GM12878 (cell line): ENCODE measurements at regions of chr5 and their contacts with region 1.

Region 1: DNA sequence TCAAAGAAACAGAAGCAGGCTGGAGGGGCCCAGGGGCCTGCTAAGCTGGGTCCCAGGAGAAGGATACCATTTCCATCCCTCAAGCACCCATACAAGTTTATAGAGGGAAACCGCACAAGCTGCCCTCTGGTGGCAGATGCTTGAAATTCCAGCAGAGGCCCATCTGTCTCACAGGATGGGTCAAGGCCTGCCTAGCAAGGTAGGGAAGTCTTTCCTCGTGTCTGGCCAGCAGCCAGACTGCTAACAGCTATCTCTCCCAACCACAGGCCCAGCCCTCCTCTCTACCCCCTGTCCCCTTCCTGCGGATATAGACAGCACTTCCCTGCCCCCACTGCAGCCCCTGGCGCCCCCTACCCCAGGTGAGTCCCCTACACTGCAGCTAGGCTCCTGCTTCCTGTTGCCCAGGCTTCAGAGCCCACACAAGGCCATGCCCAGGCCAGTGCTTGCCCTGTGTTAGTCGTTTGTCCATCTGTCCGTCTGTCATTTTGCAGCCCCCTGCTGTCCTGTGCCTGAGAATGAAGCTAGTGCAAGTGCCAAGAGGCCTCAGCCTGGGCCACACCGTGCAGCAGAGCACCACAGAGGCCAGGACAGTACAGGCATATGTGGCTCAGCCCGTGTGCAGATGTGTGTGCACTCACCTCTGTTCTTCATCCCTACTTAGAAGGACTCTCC is 26.2 kb downstream of the TCF7 start:
- DNase-seq: no peak
- ATAC-seq: peak; percentile 68
- H3K4me3 ChIP-seq: no peak overlapping the region
- H3K27ac ChIP-seq: peak overlapping the region; percentile 90
- H3K4me1 ChIP-seq: peaks cover 50% of the 10 kb centered on the region
- H3K27me3 ChIP-seq: no peaks in the 10 kb centered on the region
- CTCF ChIP-seq: peak; percentile 78 to 83 (median 80)
- EP300 ChIP-seq: no peak
- POLR2A ChIP-seq: peak; percentile 41; the same call in 1 of the 2 replicates
- RAD21 ChIP-seq: peak; percentile 82

Region 2: DNA sequence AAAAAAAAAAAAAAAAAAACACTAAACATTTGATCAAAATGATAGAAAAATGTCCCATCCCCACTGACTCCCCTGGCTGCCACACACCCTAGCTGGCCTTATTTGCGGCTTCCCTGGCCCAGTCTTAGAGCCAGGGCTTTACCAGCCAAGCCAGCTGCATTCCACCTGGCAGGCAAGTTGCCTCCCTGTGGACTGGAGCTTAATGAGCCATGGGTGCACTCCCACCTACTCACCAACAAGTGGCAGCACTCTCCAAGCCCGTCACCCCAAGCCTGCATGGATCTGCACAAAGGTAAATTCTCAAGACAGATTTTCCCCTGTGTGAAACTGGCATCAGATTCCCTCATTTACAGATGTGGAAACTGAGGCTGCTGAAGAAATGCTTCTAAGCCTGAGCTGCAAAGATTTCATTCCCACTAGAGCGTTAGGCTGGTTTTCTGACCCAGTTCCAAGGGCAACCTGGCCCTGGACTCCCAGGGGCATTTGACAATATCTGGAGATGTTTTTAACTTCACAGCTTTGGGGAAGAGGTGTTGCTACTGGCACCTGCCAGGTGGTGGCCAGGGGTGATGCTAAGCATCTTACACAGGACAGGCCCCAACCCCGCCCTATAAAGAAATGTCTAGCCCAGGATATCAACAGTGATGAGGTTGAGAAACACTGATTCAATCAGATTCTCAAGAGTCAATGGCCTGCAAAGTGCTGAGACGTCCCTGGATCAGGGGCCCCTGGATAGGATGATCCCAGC is 114.0 kb before region 1 on chr5:
- CTCF ChIA-PET with region 1: interaction called, 792 read pairs
- POLR2A ChIA-PET with region 1: interaction called, 3 read pairs
- RAD21 ChIA-PET with region 1: interaction called, 13 read pairs
- SMC1A ChIA-PET with region 1: interaction called, 441 read pairs
- in situ Hi-C with region 1: no loop called
- intact Hi-C with region 1: no loop called
- DNase-seq: no peak
- ATAC-seq: peak; percentile 95
- H3K4me3 ChIP-seq: no peak overlapping the region
- H3K27ac ChIP-seq: no peak overlapping the region
- H3K4me1 ChIP-seq: peaks cover 17% of the 10 kb centered on the region
- H3K27me3 ChIP-seq: no peaks in the 10 kb centered on the region; a peak in 2 of 4 replicates
- CTCF ChIP-seq: peak; percentile 76 to 79 (median 78)
- EP300 ChIP-seq: no peak
- POLR2A ChIP-seq: no peak
- RAD21 ChIP-seq: peak; percentile 72

Region 3: GRCh38 chr5:134053840-134054338 is 86.8 kb before region 1 on chr5:
- CTCF ChIA-PET with region 1: interaction called, 30 read pairs
- POLR2A ChIA-PET with region 1: interaction called, 6 read pairs
- RAD21 ChIA-PET with region 1: interaction called, 8 read pairs
- SMC1A ChIA-PET with region 1: interaction called, 6 read pairs
- in situ Hi-C with region 1: no loop called
- intact Hi-C with region 1: no loop called
- DNase-seq: no peak
- ATAC-seq: peak; percentile 89
- H3K4me3 ChIP-seq: no peak overlapping the region
- H3K27ac ChIP-seq: no peak overlapping the region
- H3K4me1 ChIP-seq: peaks cover 11% of the 10 kb centered on the region
- H3K27me3 ChIP-seq: no peaks in the 10 kb centered on the region
- CTCF ChIP-seq: no peak
- EP300 ChIP-seq: no peak; a peak in 1 of 4 replicates
- POLR2A ChIP-seq: no peak
- RAD21 ChIP-seq: no peak

Region 4: GRCh38 chr5:134113902-134114875 is 26.5 kb before region 1 on chr5 and contains the start of gene TCF7:
- CTCF ChIA-PET with region 1: interaction called, 88 read pairs
- POLR2A ChIA-PET with region 1: interaction called, 291 read pairs
- RAD21 ChIA-PET with region 1: interaction called, 123 read pairs
- SMC1A ChIA-PET with region 1: interaction called, 5 read pairs
- in situ Hi-C with region 1: no loop called
- intact Hi-C with region 1: no loop called
- DNase-seq: no peak
- ATAC-seq: peak; percentile 82
- H3K4me3 ChIP-seq: peak within 1 kb of the TSS; percentile 83
- H3K27ac ChIP-seq: peak within 1 kb of the TSS; percentile 56
- H3K4me1 ChIP-seq: peaks cover 40% of the 10 kb centered on the region
- H3K27me3 ChIP-seq: no peaks in the 10 kb centered on the region; a peak in 1 of 4 replicates
- CTCF ChIP-seq: no peak
- EP300 ChIP-seq: no peak
- POLR2A ChIP-seq: peak; percentile 72
- RAD21 ChIP-seq: no peak
- polyA plus RNA-seq, gene TCF7: 10.0 to 13.2 TPM

Region 5: GRCh38 chr5:134125039-134126015 is 15.3 kb before region 1 on chr5:
- CTCF ChIA-PET with region 1: interaction called, 184 read pairs
- POLR2A ChIA-PET with region 1: interaction called, 291 read pairs
- RAD21 ChIA-PET with region 1: interaction called, 128 read pairs
- SMC1A ChIA-PET with region 1: interaction called, 76 read pairs
- in situ Hi-C with region 1: no loop called
- intact Hi-C with region 1: no loop called
- DNase-seq: no peak
- ATAC-seq: peak; percentile 41
- H3K4me3 ChIP-seq: no peak overlapping the region
- H3K27ac ChIP-seq: peak overlapping the region; percentile 47
- H3K4me1 ChIP-seq: peaks cover 64% of the 10 kb centered on the region
- H3K27me3 ChIP-seq: no peaks in the 10 kb centered on the region
- CTCF ChIP-seq: no peak
- EP300 ChIP-seq: 0 out of 4 replicates have a peak, but pooled peaks of 1 of the 2 experiments have one; percentile 11
- POLR2A ChIP-seq: no peak
- RAD21 ChIP-seq: no peak

Region 6: DNA sequence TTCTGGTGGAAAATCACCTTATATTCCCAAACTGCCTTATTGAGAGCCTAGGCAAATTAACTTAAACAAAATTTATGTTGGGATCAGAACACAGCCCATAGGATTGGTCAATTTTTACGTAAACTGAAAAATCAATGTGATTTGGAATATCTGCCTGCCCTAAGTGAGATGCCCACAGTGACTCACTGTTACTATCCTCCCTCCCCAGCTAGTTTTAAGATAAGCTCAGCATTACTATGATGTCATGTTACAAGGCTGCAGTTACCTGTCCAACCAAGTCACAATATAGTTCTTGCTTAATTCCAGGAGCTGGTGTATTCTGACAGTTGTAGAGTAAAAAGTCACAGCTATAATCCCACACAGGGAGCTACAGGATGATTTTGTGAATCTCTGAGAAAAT is 13.0 kb after region 1 on chr5:
- CTCF ChIA-PET with region 1: interaction called, 20 read pairs
- POLR2A ChIA-PET with region 1: no interaction called
- RAD21 ChIA-PET with region 1: interaction called, 3 read pairs
- SMC1A ChIA-PET with region 1: interaction called, 15 read pairs
- in situ Hi-C with region 1: no loop called
- intact Hi-C with region 1: no loop called
- DNase-seq: no peak
- ATAC-seq: no peak
- H3K4me3 ChIP-seq: no peak overlapping the region
- H3K27ac ChIP-seq: no peak overlapping the region
- H3K4me1 ChIP-seq: no peaks in the 10 kb centered on the region
- H3K27me3 ChIP-seq: no peaks in the 10 kb centered on the region
- CTCF ChIP-seq: no peak
- EP300 ChIP-seq: no peak
- POLR2A ChIP-seq: no peak
- RAD21 ChIP-seq: no peak